ENCODE measurements at regions of chr4 and their contacts with region 1.

Region 1: DNA sequence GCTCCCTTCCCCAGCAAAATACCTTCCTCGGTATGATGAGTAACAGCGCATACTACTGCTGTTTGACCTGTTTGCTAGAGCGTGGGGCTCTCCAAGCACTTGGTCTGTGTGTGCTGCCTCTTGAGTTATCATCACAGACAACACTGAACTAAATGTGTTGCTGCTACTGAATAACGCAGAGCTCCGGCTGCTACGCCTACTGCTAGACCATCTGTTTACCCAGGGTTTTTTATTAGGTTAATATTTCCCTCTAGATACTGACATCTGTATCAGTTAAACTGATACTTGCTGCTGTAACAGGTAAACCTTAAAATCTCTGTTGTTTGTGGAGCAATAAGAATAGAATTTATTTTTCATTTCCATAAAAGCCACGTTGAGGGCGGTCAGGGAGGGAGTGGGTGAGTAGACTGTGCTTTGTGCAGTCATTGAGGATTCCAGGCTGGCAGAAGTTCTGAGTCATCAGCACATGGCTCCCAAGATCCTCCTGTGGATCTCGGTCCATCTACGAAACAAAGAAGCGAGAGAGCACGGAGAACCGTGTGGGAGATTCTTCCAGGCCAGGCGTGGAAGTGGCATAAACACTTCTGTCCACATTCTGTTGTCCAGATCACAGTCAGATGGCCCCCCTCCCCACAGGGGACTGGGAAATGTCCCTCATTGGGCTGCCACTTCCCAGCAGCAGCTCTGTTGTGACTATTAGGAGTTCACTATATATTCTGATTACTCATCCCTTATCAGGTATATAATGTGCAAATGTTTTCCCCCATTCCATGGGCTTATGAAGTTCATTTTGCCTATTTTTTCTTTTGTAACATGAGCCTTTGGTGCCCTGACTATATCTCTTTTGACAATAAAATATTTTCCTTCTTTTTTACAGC is 14.1 kb downstream of the GRK4 start:
- DNase-seq: no peak
- H3K4me3 Mint-ChIP-seq: no peak overlapping the region
- H3K27ac Mint-ChIP-seq: no peak overlapping the region
- H3K4me1 Mint-ChIP-seq: no peaks in the 10 kb centered on the region
- H3K27me3 Mint-ChIP-seq: no peaks in the 10 kb centered on the region

Region 2: GRCh38 chr4:2991243-2991642 is 13.8 kb after region 1 on chr4:
- CTCF ChIA-PET with region 1: interaction called, 18 read pairs
- intact Hi-C with region 1: no loop called
- DNase-seq: no peak
- H3K4me3 Mint-ChIP-seq: no peak overlapping the region
- H3K27ac Mint-ChIP-seq: no peak overlapping the region
- H3K4me1 Mint-ChIP-seq: no peaks in the 10 kb centered on the region
- H3K27me3 Mint-ChIP-seq: peaks cover 4% of the 10 kb centered on the region

Region 3: GRCh38 chr4:3031357-3032082 is 54.1 kb after region 1 on chr4:
- CTCF ChIA-PET with region 1: interaction called, 25 read pairs
- intact Hi-C with region 1: no loop called
- DNase-seq: no peak
- H3K4me3 Mint-ChIP-seq: no peak overlapping the region
- H3K27ac Mint-ChIP-seq: no peak overlapping the region
- H3K4me1 Mint-ChIP-seq: no peaks in the 10 kb centered on the region
- H3K27me3 Mint-ChIP-seq: no peaks in the 10 kb centered on the region

Region 4: GRCh38 chr4:3037957-3038461 is 60.6 kb after region 1 on chr4:
- CTCF ChIA-PET with region 1: interaction called, 25 read pairs
- intact Hi-C with region 1: loop called (anchors 1 kb)
- DNase-seq: peak; percentile 45
- H3K4me3 Mint-ChIP-seq: peak overlapping the region; percentile 69
- H3K27ac Mint-ChIP-seq: no peak overlapping the region
- H3K4me1 Mint-ChIP-seq: peaks cover 37% of the 10 kb centered on the region
- H3K27me3 Mint-ChIP-seq: no peaks in the 10 kb centered on the region

Region 5: DNA sequence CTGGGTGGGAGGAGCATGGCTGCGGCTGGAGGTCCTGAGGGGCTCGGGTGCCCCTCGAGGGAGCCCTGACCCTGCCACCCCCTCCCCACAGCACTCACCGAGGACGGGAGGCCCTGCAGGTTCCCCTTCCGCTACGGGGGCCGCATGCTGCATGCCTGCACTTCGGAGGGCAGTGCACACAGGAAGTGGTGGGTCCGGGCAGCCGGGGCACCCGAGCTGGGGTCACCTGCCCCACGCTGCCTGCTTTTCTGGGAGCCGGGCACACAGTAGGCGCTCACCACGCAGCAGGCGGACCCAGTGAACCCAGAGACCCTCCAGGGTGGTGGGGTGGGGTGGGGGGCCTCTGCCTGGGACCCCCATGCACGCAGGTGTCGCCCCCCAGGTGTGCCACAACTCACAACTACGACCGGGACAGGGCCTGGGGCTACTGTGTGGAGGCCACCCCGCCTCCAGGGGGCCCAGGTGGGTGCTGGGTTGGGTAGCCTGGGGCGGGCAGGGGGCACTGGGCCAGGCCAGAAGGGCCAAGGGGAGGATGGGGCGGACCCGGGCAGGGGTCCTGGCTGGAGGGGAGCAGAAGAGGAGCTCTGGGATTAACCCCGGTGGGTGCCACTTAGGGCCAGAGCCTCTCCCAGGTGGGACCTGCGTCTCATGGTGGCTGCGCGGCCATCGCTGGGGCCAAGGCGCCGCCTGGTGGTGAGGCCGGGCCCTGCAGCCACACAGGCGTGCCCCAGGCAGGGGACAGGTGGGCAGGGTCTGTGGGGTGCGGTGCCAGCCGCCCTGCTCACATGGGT is 465.7 kb after region 1 on chr4:
- CTCF ChIA-PET with region 1: no interaction called
- intact Hi-C with region 1: loop called (anchors 10 kb)
- DNase-seq: peak; percentile 71
- H3K4me3 Mint-ChIP-seq: no peak overlapping the region
- H3K27ac Mint-ChIP-seq: no peak overlapping the region
- H3K4me1 Mint-ChIP-seq: no peaks in the 10 kb centered on the region
- H3K27me3 Mint-ChIP-seq: no peaks in the 10 kb centered on the region

Measured in activated naive CD4-positive, alpha-beta T cell treated with anti-CD3 and anti-CD28 coated beads for 36 hours (primary cell).